ENCODE measurements at regions of chr20 and their contacts with region 1.

Region 1: GRCh38 chr20:13941031-13941430 is 49.4 kb downstream of the SEL1L2 start:
- DNase-seq: no peak
- H3K4me3 ChIP-seq: no peak overlapping the region
- H3K27ac ChIP-seq: no peak overlapping the region
- H3K4me1 ChIP-seq: no peaks in the 10 kb centered on the region
- H3K27me3 ChIP-seq: no peaks in the 10 kb centered on the region
- CTCF ChIP-seq: no peak
- EP300 ChIP-seq: no peak
- POLR2A ChIP-seq: no peak
- RAD21 ChIP-seq: no peak

Region 2: DNA sequence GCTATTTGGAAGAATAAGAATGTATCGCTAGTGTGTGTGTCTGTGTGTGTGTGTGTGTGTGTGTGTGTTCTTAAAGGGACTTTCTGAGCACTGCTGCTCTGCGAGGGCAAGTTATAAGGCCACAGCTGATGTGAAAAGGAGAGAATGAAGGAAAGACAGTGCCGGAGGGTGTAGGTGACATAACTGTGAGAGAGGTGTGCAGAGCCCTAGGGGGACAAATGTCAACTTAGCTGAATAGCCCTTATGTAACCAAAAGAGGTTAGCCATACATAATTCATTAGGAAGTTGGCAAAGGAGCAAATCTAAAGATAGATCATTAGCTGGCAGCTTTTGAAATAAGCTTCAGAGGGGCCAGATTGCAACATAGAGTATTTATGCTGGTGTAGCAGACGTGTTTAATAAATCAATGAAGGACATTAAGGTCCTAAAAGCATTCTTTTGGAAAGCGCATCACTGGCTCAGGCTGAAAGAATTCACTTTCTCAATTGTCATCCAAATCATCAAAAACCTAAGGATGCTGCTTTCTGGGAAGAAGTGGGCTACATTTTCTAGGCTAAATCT is 75.2 kb before region 1 on chr20:
- CTCF ChIA-PET with region 1: no interaction called
- POLR2A ChIA-PET with region 1: no interaction called
- DNase-seq: no peak
- H3K4me3 ChIP-seq: no peak overlapping the region
- H3K27ac ChIP-seq: no peak overlapping the region
- H3K4me1 ChIP-seq: no peaks in the 10 kb centered on the region; a peak in 2 of 7 replicates
- H3K27me3 ChIP-seq: no peaks in the 10 kb centered on the region
- CTCF ChIP-seq: no peak
- EP300 ChIP-seq: no peak
- POLR2A ChIP-seq: no peak
- RAD21 ChIP-seq: no peak

Region 3: DNA sequence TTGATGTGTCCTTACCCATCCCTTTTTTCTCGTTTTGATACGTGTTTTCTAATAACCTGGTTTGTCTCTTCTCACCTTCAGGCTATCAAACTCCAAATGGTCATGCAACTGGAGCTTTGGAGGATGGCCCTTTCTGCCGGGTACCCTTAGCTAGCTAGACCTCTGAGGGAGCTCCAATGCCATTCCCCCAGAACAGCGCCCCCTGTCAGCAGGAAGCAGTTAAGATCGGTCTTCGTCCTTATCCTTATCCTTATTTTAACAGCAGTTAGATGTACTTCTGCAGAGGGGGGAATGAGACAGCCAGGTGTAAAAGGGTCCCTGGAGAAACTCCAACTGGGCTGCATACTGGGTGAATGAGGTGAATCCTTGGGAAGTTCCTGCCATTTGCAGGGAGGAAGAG is 12.2 kb after region 1 on chr20:
- CTCF ChIA-PET with region 1: interaction called, 12 read pairs
- POLR2A ChIA-PET with region 1: no interaction called
- DNase-seq: peak in 1 of 2 experiments; percentile 71
- H3K4me3 ChIP-seq: no peak overlapping the region
- H3K27ac ChIP-seq: no peak overlapping the region
- H3K4me1 ChIP-seq: no peaks in the 10 kb centered on the region
- H3K27me3 ChIP-seq: no peaks in the 10 kb centered on the region
- CTCF ChIP-seq: peak; percentile 59 to 77 (median 69)
- EP300 ChIP-seq: no peak
- POLR2A ChIP-seq: no peak
- RAD21 ChIP-seq: peak; percentile 37 to 59

Measured in H1 (cell line).